ENCODE measurements at regions of chr2 and their contacts with region 1.

Region 1: DNA sequence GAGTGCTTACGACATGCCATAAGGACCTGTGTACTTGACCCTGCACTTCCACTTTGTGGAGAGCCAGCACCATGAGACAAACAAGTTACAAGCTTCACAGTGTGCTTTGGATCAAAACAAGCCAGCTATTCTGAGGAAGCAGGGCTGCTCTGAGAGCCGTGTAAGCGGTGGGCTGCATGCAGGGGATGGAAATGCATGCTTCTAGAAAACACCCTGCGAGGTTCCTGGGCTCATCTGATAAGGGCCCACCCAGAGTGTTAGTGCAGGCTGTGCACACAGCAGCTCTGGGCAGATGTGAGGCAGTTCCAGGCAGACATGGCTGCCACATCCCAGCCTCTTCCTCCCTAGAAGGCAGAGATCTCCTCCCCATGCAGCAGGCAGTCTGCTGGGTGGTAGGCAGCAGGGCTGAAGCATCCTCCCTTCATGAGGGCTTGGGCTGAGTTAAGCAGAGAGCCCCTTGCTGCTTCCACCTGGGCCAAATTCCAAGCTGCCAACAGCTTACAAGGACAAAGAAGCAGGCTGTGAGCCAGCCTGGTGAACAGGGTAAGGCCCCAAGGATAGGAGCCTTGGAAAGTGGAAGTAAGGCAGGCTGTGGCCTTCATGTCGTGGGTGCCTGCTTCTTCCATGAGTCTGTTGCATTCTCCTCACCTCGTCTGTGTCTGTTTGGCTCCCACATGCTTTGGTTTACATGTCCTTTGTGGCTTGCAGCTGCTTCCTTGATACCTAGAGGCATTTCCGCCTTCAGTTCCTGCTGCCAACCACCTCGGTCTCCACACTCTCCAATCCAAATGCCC is 7.7 kb downstream of the PSD4 start:
- DNase-seq: no peak
- ATAC-seq: peak; percentile 18
- H3K4me3 ChIP-seq: no peak overlapping the region
- H3K27ac ChIP-seq: no peak overlapping the region
- H3K4me1 ChIP-seq: peaks cover 31% of the 10 kb centered on the region
- H3K27me3 ChIP-seq: no peaks in the 10 kb centered on the region
- CTCF ChIP-seq: no peak
- EP300 ChIP-seq: no peak
- POLR2A ChIP-seq: no peak
- RAD21 ChIP-seq: no peak

Region 2: DNA sequence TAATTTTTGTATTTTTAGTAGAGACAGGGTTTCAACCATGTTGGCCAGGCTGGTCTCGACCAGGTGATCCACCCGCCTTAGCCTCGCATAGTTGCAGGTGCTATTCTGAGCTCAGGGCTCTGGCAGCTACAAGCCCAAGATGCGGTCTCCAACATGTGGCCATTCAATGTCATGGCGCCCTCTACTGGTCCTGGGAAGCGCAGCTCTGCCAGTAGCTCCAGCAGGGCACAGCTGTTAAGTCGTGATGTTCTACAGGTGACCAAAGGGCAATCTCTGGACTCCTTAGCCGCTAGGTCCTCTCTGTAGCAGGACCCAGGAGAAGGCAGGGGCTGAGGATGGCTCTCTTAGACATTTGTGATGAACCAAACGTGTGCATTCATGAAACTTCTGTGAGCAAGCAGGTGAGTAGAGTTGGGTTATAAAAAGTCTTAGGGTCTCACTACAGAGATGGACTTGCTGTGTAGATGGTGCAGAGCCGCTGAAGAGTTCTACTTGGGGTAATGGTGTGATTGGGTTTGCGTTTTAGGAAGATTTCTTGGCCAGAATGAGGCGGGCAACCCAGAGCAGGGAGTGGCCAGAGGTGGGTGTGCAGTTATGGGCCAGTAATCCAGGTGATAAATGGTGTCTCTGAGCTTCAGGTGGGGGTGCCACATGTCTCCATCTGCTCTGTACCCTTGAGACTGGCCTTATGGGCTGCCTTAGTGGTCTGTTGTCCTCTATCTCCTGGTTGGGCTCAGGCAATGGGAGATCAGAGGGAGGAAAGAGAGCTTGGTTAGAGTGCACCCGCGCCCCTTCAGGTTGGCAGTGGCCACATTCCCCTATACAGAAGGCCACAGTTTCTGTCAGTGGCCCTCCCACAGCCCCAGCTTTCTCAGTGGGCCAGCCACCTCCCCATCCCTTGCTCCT is 239.4 kb before region 1 on chr2:
- CTCF ChIA-PET with region 1: no interaction called
- POLR2A ChIA-PET with region 1: no interaction called
- RAD21 ChIA-PET with region 1: no interaction called
- SMC1A ChIA-PET with region 1: no interaction called
- in situ Hi-C with region 1: no loop called
- intact Hi-C with region 1: no loop called
- DNase-seq: peak; percentile 19
- ATAC-seq: peak; percentile 100
- H3K4me3 ChIP-seq: no peak overlapping the region
- H3K27ac ChIP-seq: no peak overlapping the region
- H3K4me1 ChIP-seq: no peaks in the 10 kb centered on the region
- H3K27me3 ChIP-seq: 0 out of 4 replicates have a peak, but pooled peaks cover 0 to 6% of the 10 kb centered on the region in 2 experiments
- CTCF ChIP-seq: peak; percentile 93 to 96 (median 95)
- EP300 ChIP-seq: no peak
- POLR2A ChIP-seq: no peak
- RAD21 ChIP-seq: peak; percentile 96

Region 3: GRCh38 chr2:113198790-113199612 is 17.5 kb after region 1 on chr2:
- CTCF ChIA-PET with region 1: interaction called, 106 read pairs
- POLR2A ChIA-PET with region 1: interaction called, 4 read pairs
- RAD21 ChIA-PET with region 1: no interaction called
- SMC1A ChIA-PET with region 1: interaction called, 21 read pairs
- in situ Hi-C with region 1: no loop called
- intact Hi-C with region 1: no loop called
- DNase-seq: no peak
- ATAC-seq: peak; percentile 89
- H3K4me3 ChIP-seq: no peak overlapping the region
- H3K27ac ChIP-seq: no peak overlapping the region
- H3K4me1 ChIP-seq: no peaks in the 10 kb centered on the region
- H3K27me3 ChIP-seq: no peaks in the 10 kb centered on the region
- CTCF ChIP-seq: peak; percentile 54 to 80 (median 75)
- EP300 ChIP-seq: no peak
- POLR2A ChIP-seq: no peak
- RAD21 ChIP-seq: peak; percentile 40

Region 4: GRCh38 chr2:113257516-113258264 is 76.2 kb after region 1 on chr2:
- CTCF ChIA-PET with region 1: no interaction called
- POLR2A ChIA-PET with region 1: no interaction called
- RAD21 ChIA-PET with region 1: no interaction called
- SMC1A ChIA-PET with region 1: no interaction called
- in situ Hi-C with region 1: no loop called
- intact Hi-C with region 1: no loop called
- DNase-seq: no peak
- ATAC-seq: no peak
- H3K4me3 ChIP-seq: no peak overlapping the region
- H3K27ac ChIP-seq: no peak overlapping the region
- H3K4me1 ChIP-seq: no peaks in the 10 kb centered on the region
- H3K27me3 ChIP-seq: no peaks in the 10 kb centered on the region
- CTCF ChIP-seq: no peak
- EP300 ChIP-seq: no peak
- POLR2A ChIP-seq: no peak
- RAD21 ChIP-seq: no peak

Region 5: DNA sequence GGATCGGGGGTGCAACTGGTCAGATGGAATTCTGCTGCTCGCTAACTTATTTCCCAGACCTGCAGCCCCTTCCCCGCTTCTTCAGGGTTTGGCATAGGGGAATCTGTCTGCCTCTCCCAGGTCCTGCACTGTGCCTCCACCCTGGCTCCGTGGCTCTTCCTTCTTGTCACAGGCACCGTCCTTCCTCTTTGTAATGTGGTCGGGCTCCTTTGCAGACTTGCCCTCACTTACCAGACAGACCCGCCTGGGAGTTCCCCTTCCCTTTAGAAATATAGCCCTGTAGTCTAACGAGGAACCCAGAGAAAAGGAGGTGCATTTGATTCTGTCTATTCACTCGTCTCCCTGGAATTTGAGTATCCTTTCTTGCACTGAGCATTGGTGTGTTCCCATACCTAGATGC is 161.2 kb after region 1 on chr2:
- CTCF ChIA-PET with region 1: no interaction called
- POLR2A ChIA-PET with region 1: no interaction called
- RAD21 ChIA-PET with region 1: no interaction called
- SMC1A ChIA-PET with region 1: no interaction called
- in situ Hi-C with region 1: no loop called
- intact Hi-C with region 1: no loop called
- DNase-seq: no peak
- ATAC-seq: peak; percentile 55
- H3K4me3 ChIP-seq: no peak overlapping the region
- H3K27ac ChIP-seq: no peak overlapping the region
- H3K4me1 ChIP-seq: no peaks in the 10 kb centered on the region
- H3K27me3 ChIP-seq: no peaks in the 10 kb centered on the region
- CTCF ChIP-seq: no peak
- EP300 ChIP-seq: no peak
- POLR2A ChIP-seq: no peak
- RAD21 ChIP-seq: no peak

Measured in GM12878 (cell line).